ENCODE measurements at regions of chr4 and their contacts with region 1.

Region 1: GRCh38 chr4:147866532-147867271 is 134.8 kb downstream of the ARHGAP10 start:
- DNase-seq: peak; percentile 91 to 97 (median 92)
- H3K4me3 ChIP-seq: no peak overlapping the region
- H3K27ac ChIP-seq: no peak overlapping the region
- H3K4me1 ChIP-seq: no peaks in the 10 kb centered on the region
- H3K27me3 ChIP-seq: no peaks in the 10 kb centered on the region

Region 2: DNA sequence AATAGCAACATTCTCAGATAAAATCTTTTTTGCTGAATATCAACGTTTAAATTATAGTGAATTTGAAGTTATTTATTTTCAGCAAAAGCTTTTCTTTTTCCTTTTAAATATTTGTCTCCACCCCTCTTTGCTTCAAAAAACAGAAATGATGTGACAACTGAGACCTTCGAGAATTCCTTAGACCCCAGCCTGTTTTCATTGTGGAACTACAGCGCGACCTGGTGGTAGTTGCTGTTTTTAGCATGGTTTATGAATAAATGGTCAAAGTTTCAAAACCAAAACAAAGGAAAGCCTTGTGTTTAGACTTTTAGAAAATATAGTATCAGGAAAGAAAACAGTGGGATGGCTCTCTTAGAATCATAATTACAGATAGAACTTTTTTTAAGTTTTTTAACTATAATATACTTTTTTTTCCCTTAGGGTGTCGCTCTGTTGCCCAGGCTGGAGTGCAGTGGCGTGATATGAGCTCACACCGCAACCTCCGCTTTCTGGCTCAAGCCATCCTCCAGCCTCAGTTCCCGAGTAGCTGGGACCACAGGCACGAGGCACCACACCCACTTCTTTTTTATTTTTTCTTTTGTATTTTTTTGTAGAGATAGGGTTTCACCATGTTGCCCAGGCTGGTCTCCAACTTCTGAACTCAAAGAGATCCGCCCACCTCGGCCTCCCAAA is 276.3 kb before region 1 on chr4:
- CTCF ChIA-PET with region 1: interaction called, 14 read pairs
- POLR2A ChIA-PET with region 1: no interaction called
- DNase-seq: peak; percentile 40 to 67 (median 66)
- H3K4me3 ChIP-seq: no peak overlapping the region
- H3K27ac ChIP-seq: no peak overlapping the region
- H3K4me1 ChIP-seq: no peaks in the 10 kb centered on the region
- H3K27me3 ChIP-seq: peaks cover 0 to 2% (median 0%) of the 10 kb centered on the region in 5 experiments

Region 3: DNA sequence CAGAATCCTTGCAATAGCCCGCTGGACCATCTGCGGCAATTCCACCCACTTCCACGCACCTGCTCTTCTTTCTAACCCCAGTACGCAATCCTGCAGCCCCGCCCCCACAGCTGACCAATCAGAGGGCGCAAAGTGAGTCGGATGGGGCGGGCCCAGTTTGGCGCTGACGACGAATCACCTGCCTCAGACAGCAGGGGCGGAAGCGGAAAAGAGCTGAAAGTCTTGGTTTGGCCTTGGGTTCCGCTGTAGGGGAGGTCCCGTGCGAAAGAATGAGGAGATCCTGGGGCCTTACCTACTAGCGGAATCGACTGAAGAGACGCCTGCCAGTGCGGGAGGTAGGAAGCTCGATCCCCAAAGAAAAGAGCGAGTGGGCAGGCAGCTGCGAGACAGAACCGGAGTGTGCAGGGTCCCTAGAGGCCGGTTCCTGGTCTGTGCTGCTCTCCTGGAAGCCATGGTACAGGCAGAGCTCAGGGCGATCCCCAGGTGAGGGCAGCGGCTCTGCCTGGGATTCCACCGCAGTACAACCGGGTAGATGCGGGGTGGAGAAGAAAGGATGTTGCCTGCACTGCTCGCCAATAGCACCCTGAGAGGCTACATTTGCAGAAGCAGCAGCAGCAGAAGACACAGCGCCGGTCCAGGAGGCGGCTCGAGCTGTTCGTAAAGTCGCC is 249.4 kb before region 1 on chr4 and contains the start of gene TMEM184C:
- CTCF ChIA-PET with region 1: interaction called, 27 read pairs
- POLR2A ChIA-PET with region 1: no interaction called
- DNase-seq: peak; percentile 96 to 99 (median 99)
- H3K4me3 ChIP-seq: peak within 1 kb of the TSS; percentile 92 to 100 (median 97)
- H3K27ac ChIP-seq: peak within 1 kb of the TSS; percentile 91 to 95
- H3K4me1 ChIP-seq: peaks cover 11 to 31% (median 17%) of the 10 kb centered on the region in 4 experiments
- H3K27me3 ChIP-seq: peaks cover 0 to 5% (median 0%) of the 10 kb centered on the region in 5 experiments

Region 4: GRCh38 chr4:147707865-147708672 is 158.6 kb before region 1 on chr4:
- CTCF ChIA-PET with region 1: interaction called, 101 read pairs
- POLR2A ChIA-PET with region 1: no interaction called
- DNase-seq: peak; percentile 68 to 76 (median 68)
- H3K4me3 ChIP-seq: no peak overlapping the region
- H3K27ac ChIP-seq: no peak overlapping the region
- H3K4me1 ChIP-seq: no peaks in the 10 kb centered on the region
- H3K27me3 ChIP-seq: no peaks in the 10 kb centered on the region

Region 5: DNA sequence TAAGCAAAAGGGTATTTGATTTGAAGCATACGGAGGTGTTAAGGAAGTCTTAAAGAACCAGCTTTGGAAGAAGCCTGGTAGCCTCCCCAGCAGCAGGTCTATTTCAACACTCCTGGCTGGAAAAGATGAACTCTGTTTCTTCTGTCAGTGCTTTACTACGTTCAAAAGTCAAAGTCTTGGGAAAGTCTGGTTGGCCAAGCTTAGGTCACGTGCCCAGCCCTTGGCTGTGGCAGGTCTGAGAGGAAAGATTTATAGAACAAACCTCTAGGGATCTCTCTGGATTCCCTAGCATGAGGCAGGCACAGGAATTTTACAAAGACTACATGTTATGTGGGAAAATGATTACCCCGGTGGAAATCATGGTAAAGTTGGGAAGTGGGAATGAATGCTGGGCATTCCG is 143.4 kb before region 1 on chr4:
- CTCF ChIA-PET with region 1: interaction called, 12 read pairs
- POLR2A ChIA-PET with region 1: no interaction called
- DNase-seq: no peak
- H3K4me3 ChIP-seq: no peak overlapping the region
- H3K27ac ChIP-seq: no peak overlapping the region
- H3K4me1 ChIP-seq: no peaks in the 10 kb centered on the region
- H3K27me3 ChIP-seq: no peaks in the 10 kb centered on the region

Region 6: DNA sequence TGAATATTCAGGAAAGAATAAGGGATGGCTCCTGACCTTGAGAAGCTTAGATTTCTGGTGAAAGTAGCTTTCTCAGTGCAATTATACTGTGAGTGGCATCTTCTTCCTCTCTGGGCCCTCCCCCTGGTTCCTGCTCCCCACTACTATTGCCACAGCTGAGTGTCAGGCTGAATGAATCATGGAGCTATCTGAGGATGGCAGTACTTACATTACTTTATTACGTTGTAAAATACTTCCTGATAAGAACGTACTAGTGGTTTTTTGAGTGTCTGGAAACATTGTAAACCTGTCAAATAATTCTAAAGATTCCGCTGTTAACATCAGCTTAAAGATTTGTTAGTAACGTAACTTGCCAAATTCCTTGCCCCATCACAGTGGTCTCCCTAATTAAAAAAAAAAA is 98.6 kb before region 1 on chr4:
- CTCF ChIA-PET with region 1: interaction called, 16 read pairs
- POLR2A ChIA-PET with region 1: no interaction called
- DNase-seq: peak; percentile 61 to 93 (median 88)
- H3K4me3 ChIP-seq: no peak overlapping the region
- H3K27ac ChIP-seq: no peak overlapping the region
- H3K4me1 ChIP-seq: peaks cover 0 to 10% (median 8%) of the 10 kb centered on the region in 4 experiments
- H3K27me3 ChIP-seq: peaks cover 0 to 7% (median 0%) of the 10 kb centered on the region in 5 experiments

Region 7: GRCh38 chr4:147879676-147880075 is 13.0 kb after region 1 on chr4:
- CTCF ChIA-PET with region 1: interaction called, 16 read pairs
- POLR2A ChIA-PET with region 1: no interaction called
- DNase-seq: no peak
- H3K4me3 ChIP-seq: no peak overlapping the region
- H3K27ac ChIP-seq: no peak overlapping the region
- H3K4me1 ChIP-seq: no peaks in the 10 kb centered on the region
- H3K27me3 ChIP-seq: no peaks in the 10 kb centered on the region

Region 8: DNA sequence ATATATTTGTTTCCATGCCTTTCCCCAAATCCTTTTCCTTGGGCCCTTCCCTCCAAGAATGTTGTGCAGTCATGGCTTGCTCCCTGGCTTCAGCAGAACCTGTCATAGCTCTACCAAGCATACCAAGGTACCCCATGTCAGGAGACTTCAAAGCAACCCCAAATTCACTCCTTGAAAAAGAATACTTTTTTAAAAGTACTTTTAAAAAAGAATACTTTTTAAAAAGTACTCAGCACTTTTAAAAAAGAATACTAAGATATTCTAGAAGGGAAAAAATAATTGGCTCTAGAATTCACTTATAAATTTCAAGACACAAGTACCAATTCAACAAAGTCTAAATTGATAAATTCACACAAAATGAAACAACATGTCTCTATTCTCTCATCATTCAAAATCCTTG is 499.5 kb after region 1 on chr4:
- CTCF ChIA-PET with region 1: no interaction called
- POLR2A ChIA-PET with region 1: no interaction called
- DNase-seq: peak in 1 of 3 donors; percentile 7
- H3K4me3 ChIP-seq: no peak overlapping the region
- H3K27ac ChIP-seq: no peak overlapping the region
- H3K4me1 ChIP-seq: no peaks in the 10 kb centered on the region
- H3K27me3 ChIP-seq: no peaks in the 10 kb centered on the region